ENCODE measurements at regions of chr4 and their contacts with region 1.

Region 1: GRCh38 chr4:112109186-112110058 is 35.8 kb upstream of the FAM241A start:
- DNase-seq: no peak
- ATAC-seq: peak; percentile 41 to 88
- H3K4me3 ChIP-seq: no peak overlapping the region
- H3K27ac ChIP-seq: peak overlapping the region; percentile 75
- H3K4me1 ChIP-seq: no peaks in the 10 kb centered on the region
- H3K27me3 ChIP-seq: no peaks in the 10 kb centered on the region

Region 2: GRCh38 chr4:112145326-112145819 is 36.0 kb after region 1 on chr4 and contains the start of gene FAM241A:
- intact Hi-C with region 1: loop called in 1 of 4 experiments (anchors 5 kb)
- DNase-seq: peak; percentile 90 to 96 (median 96)
- ATAC-seq: peak; percentile 98 to 99
- H3K4me3 ChIP-seq: peak within 1 kb of the TSS; percentile 67
- H3K27ac ChIP-seq: peak within 1 kb of the TSS; percentile 85
- H3K4me1 ChIP-seq: no peaks in the 10 kb centered on the region
- H3K27me3 ChIP-seq: no peaks in the 10 kb centered on the region
- total RNA-seq, gene FAM241A: 4.8 to 7.9 (median 7.1) TPM

Region 3: GRCh38 chr4:112225157-112225556 is 115.7 kb after region 1 on chr4:
- intact Hi-C with region 1: loop called in 1 of 4 experiments (anchors 5 kb)
- DNase-seq: no peak
- ATAC-seq: no peak
- H3K4me3 ChIP-seq: no peak overlapping the region
- H3K27ac ChIP-seq: no peak overlapping the region
- H3K4me1 ChIP-seq: no peaks in the 10 kb centered on the region
- H3K27me3 ChIP-seq: no peaks in the 10 kb centered on the region

Region 4: DNA sequence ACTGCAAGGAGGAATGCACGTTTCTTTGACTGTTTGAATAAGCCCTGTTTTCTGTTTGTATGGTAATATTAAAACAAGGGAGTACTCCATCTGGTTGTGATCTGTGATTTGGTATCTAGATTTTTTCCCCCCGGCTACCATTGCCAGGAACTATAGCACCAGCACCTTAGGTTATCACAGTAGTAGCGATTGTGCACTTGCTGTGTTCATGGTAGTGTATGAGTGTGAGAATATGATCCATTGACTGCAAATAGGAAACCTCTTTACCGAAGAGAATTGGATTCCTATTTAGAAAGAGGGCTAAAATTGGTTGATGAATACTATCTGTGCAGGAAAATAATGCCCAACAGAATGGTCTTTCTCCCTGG is 597.4 kb after region 1 on chr4:
- intact Hi-C with region 1: no loop called
- DNase-seq: no peak
- ATAC-seq: no peak
- H3K4me3 ChIP-seq: peak overlapping the region; percentile 58
- H3K27ac ChIP-seq: peak overlapping the region; percentile 21
- H3K4me1 ChIP-seq: no peaks in the 10 kb centered on the region
- H3K27me3 ChIP-seq: no peaks in the 10 kb centered on the region

Measured in right cardiac atrium (tissue), 5 donors.